HEK293 (cell line): ENCODE measurements at regions of chr1 and their contacts with region 1.

Region 1: GRCh38 chr1:233440951-233441401 is 113.5 kb downstream of the MAP3K21 start:
- H3K4me3 ChIP-seq: no peak overlapping the region
- H3K27ac ChIP-seq: no peak overlapping the region
- H3K4me1 ChIP-seq: no peaks in the 10 kb centered on the region
- CTCF ChIP-seq: peak; percentile 87

Region 2: GRCh38 chr1:233364695-233365539 is 76.1 kb before region 1 on chr1:
- CTCF ChIA-PET with region 1: interaction called, 17 read pairs
- POLR2A ChIA-PET with region 1: no interaction called
- H3K4me3 ChIP-seq: no peak overlapping the region
- H3K27ac ChIP-seq: no peak overlapping the region
- H3K4me1 ChIP-seq: peaks cover 16% of the 10 kb centered on the region
- CTCF ChIP-seq: peak; percentile 43; the same call in 1 of the 2 replicates

Region 3: DNA sequence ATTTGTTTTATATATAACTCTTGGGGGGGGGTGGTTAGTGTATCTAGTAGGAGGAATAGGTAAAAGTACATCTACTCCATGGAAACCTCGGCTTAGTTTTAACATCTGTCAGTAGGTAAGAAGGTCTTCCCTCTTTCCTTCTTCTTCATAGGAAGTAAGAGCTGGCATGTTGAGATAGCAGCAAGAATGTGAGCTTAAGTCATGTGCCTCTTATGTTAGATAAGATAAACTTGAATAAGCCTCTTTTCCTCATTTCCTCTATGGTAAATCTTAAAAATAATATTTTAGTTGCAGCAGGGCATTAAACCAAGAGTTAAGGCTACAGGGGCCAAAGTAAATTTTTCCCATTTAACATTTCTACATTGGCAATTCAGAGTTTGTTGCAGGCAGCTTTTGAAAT is 13.1 kb before region 1 on chr1:
- CTCF ChIA-PET with region 1: interaction called, 27 read pairs
- POLR2A ChIA-PET with region 1: no interaction called
- H3K4me3 ChIP-seq: no peak overlapping the region
- H3K27ac ChIP-seq: no peak overlapping the region
- H3K4me1 ChIP-seq: no peaks in the 10 kb centered on the region
- CTCF ChIP-seq: no peak

Region 4: GRCh38 chr1:233465745-233466343 is 24.9 kb after region 1 on chr1:
- CTCF ChIA-PET with region 1: interaction called, 11 read pairs
- POLR2A ChIA-PET with region 1: no interaction called
- H3K4me3 ChIP-seq: no peak overlapping the region
- H3K27ac ChIP-seq: no peak overlapping the region
- H3K4me1 ChIP-seq: no peaks in the 10 kb centered on the region
- CTCF ChIP-seq: no peak

Region 5: GRCh38 chr1:233543340-233544255 is 102.6 kb after region 1 on chr1:
- CTCF ChIA-PET with region 1: interaction called, 12 read pairs
- POLR2A ChIA-PET with region 1: no interaction called
- H3K4me3 ChIP-seq: no peak overlapping the region
- H3K27ac ChIP-seq: no peak overlapping the region
- H3K4me1 ChIP-seq: 0 out of 2 replicates have a peak, but pooled peaks cover 3% of the 10 kb centered on the region
- CTCF ChIP-seq: no peak

Region 6: DNA sequence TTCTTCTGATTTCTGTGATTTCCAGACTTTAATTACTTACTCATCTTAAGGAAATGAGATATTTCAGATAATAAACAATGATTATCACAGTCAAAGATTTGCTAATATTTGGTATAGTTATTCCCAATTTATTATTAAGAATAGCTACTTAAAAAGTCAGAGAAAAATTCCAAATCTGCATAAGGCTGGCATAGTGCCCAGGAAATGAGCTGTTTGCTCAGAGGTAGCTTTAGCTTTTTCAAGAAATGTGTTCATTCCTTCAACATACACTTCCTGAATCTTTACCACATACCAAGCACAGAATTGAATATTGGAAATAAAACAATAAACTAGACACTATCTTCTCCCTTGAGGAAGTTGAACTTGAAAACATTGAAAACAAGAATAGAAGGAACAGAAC is 128.7 kb after region 1 on chr1:
- CTCF ChIA-PET with region 1: no interaction called
- POLR2A ChIA-PET with region 1: no interaction called
- H3K4me3 ChIP-seq: no peak overlapping the region
- H3K27ac ChIP-seq: no peak overlapping the region
- H3K4me1 ChIP-seq: no peaks in the 10 kb centered on the region
- CTCF ChIP-seq: no peak

Region 7: GRCh38 chr1:233790662-233791375 is 349.8 kb after region 1 on chr1:
- CTCF ChIA-PET with region 1: interaction called, 43 read pairs
- POLR2A ChIA-PET with region 1: no interaction called
- H3K4me3 ChIP-seq: no peak overlapping the region
- H3K27ac ChIP-seq: no peak overlapping the region
- H3K4me1 ChIP-seq: no peaks in the 10 kb centered on the region
- CTCF ChIP-seq: peak; percentile 90

Region 8: DNA sequence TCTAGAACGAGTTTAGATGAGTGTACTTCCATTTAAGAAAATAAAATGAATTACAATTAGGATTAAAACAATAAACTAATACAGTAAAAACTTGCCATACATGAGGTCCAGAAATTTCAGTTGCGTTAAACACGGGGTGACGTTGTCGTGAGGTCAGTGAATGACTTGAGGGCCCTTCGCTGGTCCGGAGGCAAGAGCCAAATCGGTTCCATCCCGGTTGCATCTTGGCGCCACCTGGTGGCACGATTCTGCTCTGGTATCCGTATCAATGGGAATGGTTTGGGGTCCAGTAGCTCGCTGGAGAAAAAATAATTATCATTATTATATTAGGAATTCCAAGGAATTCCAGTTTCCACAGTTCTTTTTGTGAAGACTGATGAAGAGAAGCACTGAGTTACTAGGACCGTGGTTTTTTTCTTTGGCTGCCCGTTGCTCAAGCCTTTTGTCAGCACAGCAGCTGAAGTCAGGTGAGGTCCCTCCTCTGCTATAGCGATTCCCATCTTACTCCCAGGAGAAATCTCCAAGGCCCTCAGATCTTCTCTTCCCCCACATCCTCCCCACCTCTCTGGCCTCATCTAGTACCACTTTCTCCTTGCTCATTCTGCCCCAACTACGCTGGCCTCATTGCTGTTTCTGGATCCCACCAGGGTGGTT is 624.9 kb after region 1 on chr1:
- CTCF ChIA-PET with region 1: interaction called, 66 read pairs
- POLR2A ChIA-PET with region 1: no interaction called
- H3K4me3 ChIP-seq: no peak overlapping the region
- H3K27ac ChIP-seq: no peak overlapping the region
- H3K4me1 ChIP-seq: no peaks in the 10 kb centered on the region
- CTCF ChIP-seq: peak; percentile 79